GM10248 (cell line): ENCODE measurements at regions of chr4 and their contacts with region 1.

Region 1: GRCh38 chr4:48122756-48123155 is 11.3 kb downstream of the TXK start:
- DNase-seq: no peak
- CTCF ChIP-seq: no peak

Region 2: DNA sequence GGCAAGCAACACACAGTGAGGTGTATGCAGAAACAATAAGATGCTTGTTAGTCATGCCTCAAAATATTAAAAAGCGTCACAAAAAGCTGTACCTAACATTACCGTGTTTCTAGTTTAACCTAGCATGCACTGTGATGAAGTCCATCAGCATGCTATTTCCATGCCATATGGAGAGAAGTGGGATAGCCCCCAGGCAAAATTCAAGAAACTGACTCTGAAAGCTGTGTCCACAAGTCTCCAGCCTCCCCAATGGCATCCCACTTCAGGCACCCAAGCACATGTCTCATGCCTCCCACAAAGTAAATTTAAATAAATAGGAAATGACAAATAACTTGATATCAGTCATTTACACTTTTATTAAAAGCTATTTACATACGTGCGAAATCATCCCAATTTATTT is 1743.7 kb before region 1 on chr4:
- CTCF ChIA-PET with region 1: no interaction called
- POLR2A ChIA-PET with region 1: no interaction called
- DNase-seq: no peak
- CTCF ChIP-seq: no peak

Region 3: DNA sequence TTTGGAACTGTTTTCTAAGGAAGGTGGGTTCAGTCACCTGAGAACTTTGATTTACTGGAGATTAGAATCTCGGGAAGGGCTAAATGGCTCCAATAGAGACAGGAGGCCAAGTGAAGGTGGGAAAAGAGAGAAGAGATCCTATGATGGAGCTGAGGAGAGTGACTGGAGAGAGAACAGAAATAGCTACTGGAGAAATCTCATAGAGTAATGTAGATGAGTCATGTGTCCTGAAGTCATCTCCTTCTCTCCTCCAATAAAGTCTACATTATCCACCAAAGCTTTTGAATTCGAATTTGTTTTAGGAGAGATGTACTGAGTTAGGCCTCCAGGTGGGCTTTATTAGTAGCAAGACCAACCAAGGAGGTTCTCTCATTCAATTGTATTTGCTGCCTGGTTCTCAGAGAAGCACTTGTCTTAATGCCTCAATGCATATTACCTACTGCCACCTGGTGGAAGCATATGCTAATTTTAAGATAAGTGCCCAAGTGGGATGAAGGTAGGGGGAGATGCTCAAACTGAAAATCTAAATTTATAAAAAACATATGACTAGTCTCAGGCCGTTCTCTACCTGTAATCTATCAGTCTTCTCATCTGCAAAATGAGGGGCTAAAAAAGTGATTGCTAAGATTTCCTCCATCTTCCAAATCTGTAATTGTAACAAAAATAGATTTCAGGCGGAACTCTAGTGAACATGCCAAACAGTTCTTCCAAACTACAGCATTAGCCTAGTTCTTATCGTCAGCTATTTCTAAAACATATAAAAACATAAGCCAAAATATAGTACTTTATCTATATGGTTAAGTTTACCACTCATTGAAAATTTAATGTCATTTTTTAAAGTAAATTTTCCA is 13.1 kb before region 1 on chr4:
- CTCF ChIA-PET with region 1: interaction called, 11 read pairs
- POLR2A ChIA-PET with region 1: no interaction called
- DNase-seq: peak; percentile 46
- CTCF ChIP-seq: peak; percentile 61